ENCODE measurements at regions of chr1 and their contacts with region 1.

Region 1: DNA sequence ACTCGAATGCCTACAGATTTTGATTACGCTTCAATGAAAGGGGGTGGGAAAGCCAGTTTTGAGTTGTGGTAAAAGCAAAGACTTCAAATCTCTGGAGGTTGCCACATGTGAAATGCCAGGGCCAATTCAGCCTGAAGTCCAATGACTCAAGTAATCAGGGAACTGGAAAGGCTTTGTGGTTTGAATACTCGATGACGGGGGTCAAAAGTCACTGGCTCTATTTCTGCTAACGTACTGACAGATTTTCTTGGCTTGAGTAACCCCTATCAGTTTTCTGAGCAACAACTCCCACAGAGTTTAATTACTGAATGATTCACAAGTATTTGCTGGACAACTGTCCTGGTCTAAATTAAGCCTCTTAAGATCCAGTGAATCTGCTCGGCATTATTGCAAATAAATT is 152.2 kb downstream of the SIPA1L2 start:
- DNase-seq: peak; percentile 49 to 62
- ATAC-seq: peak; percentile 93 to 99
- H3K4me3 ChIP-seq: no peak overlapping the region
- H3K27ac ChIP-seq: peak overlapping the region; percentile 35 to 68 (median 48)
- H3K4me1 ChIP-seq: peaks cover 22 to 23% of the 10 kb centered on the region in 2 donors
- H3K27me3 ChIP-seq: no peaks in the 10 kb centered on the region
- CTCF ChIP-seq: no peak
- POLR2A ChIP-seq: no peak

Region 2: DNA sequence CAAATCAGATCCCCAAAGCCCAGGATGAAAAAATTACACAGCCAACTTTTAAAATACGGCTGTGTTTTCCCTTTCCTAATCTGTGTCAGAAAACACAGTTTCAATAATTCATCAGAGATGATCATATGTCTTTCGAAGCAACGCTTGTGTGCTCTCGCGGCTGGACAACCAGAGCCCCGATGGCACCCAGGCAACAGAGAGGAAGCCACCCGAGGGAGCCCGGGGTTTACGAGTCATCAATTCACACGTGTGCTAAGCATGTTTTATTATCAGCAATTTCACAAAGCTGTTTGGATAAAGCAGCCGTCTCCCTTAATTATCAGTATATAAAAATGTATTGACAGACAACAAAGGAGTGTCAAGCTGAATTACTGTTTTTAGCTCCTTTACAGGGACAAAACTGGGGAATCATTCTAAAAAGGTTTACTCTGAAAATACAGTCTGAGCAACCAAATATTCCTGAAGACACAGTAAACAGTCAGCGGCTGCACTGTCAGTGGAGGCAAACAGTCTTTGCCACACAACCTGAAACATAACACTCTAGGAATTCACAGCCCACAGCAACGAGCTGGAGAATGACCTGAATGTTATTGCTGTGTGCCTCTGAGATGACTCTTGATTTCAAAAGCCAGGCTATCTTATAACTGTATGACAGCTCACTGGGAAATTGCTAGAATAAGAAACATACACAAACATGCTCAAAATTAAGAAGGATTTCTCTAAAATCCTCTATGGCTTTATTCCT is 48.8 kb before region 1 on chr1:
- in situ Hi-C with region 1: no loop called
- intact Hi-C with region 1: loop called (anchors 2 kb)
- DNase-seq: peak; percentile 29 to 38
- ATAC-seq: peak; percentile 95 to 97
- H3K4me3 ChIP-seq: no peak overlapping the region
- H3K27ac ChIP-seq: peak overlapping the region in 1 of 4 donors; percentile 32
- H3K4me1 ChIP-seq: peaks cover 23 to 31% of the 10 kb centered on the region in 2 donors
- H3K27me3 ChIP-seq: no peaks in the 10 kb centered on the region
- CTCF ChIP-seq: no peak
- POLR2A ChIP-seq: no peak

Region 3: DNA sequence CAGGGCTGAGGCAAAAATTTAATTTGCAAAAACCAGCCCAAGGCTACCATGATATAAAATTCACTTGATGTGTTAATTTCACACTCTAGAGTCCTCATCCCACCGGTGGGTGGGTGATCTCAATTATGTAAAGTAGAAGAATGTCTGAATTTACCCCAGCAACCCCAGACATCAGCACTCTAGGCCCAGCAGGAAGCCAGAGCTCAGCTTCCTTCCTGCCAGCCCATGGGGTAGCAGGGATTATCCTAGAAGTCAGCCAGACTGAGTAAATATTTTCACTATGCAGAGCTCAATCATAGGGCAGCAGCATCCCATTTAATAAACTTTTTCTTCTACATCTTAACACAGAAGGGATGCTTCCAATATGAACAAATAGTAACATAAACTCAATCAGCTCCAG is 81.2 kb after region 1 on chr1:
- in situ Hi-C with region 1: no loop called
- intact Hi-C with region 1: loop called (anchors 5 kb)
- DNase-seq: no peak
- ATAC-seq: no peak
- H3K4me3 ChIP-seq: no peak overlapping the region
- H3K27ac ChIP-seq: no peak overlapping the region
- H3K4me1 ChIP-seq: peaks cover 21 to 40% of the 10 kb centered on the region in 2 donors
- H3K27me3 ChIP-seq: no peaks in the 10 kb centered on the region
- CTCF ChIP-seq: no peak
- POLR2A ChIP-seq: no peak

Region 4: GRCh38 chr1:232620356-232620969 is 142.7 kb after region 1 on chr1:
- in situ Hi-C with region 1: no loop called
- intact Hi-C with region 1: loop called (anchors 5 kb)
- DNase-seq: peak; percentile 35 to 37
- ATAC-seq: peak; percentile 78 to 84
- H3K4me3 ChIP-seq: peak overlapping the region in 2 of 4 donors; percentile 10 to 30
- H3K27ac ChIP-seq: peak overlapping the region; percentile 38 to 66 (median 56)
- H3K4me1 ChIP-seq: peaks cover 7 to 14% of the 10 kb centered on the region in 2 donors
- H3K27me3 ChIP-seq: no peaks in the 10 kb centered on the region
- CTCF ChIP-seq: no peak
- POLR2A ChIP-seq: peak in 1 of 2 donors; percentile 12